ENCODE measurements at regions of chr3 and their contacts with region 1.

Region 1: GRCh38 chr3:128051837-128052594 is at the start of gene SEC61A1:
- DNase-seq: peak; percentile 95
- H3K4me3 Mint-ChIP-seq: peak within 1 kb of the TSS; percentile 99
- H3K27ac Mint-ChIP-seq: peak within 1 kb of the TSS; percentile 99
- H3K4me1 Mint-ChIP-seq: peaks cover 38% of the 10 kb centered on the region
- H3K27me3 Mint-ChIP-seq: peaks cover 11% of the 10 kb centered on the region
- total RNA-seq, gene SEC61A1: 210 and 217 TPM in 2 replicates

Region 2: DNA sequence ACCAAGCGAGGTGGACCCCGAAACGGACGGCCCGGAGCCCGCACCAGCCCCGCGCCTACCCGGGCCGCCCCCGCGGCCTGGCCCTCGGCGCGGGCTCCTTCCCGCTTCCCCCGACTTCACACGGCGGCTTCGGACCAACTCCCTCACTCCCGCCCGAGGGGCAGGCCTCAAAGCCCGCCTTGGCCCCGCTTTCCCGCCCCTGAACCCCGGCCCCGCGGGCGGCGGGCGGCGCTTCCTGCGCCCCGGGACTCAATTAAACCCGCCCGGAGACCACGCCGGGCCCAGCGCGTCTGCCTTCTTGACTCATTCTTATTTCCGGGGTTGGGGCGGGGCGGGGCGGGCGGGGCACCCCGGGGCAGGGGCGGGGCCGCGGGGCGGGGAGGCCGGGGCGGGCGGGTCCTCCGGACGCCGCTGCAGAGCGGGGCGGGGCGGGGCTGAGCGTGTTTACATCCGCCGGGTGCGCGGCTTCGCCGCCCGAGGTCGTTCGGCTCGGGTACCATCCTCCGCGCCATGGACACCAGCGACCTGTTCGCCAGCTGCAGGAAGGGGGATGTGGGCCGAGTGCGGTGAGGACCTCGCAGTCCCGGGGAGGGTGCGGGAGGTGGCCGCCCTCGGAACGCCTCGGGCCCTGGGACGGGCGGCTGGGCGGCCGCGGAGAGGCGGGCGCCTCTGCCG is 379.4 kb before region 1 on chr3 and contains the start of gene ABTB1:
- intact Hi-C with region 1: loop called (anchors 5 kb)
- DNase-seq: peak; percentile 84
- H3K4me3 Mint-ChIP-seq: peak within 1 kb of the TSS; percentile 93
- H3K27ac Mint-ChIP-seq: peak within 1 kb of the TSS; percentile 97
- H3K4me1 Mint-ChIP-seq: peaks cover 13% of the 10 kb centered on the region
- H3K27me3 Mint-ChIP-seq: no peaks in the 10 kb centered on the region
- total RNA-seq, gene ABTB1: 11.7 and 12.1 TPM in 2 replicates

Region 3: GRCh38 chr3:127835993-127836882 is 215.8 kb before region 1 on chr3:
- intact Hi-C with region 1: no loop called
- DNase-seq: no peak
- H3K4me3 Mint-ChIP-seq: no peak overlapping the region
- H3K27ac Mint-ChIP-seq: no peak overlapping the region
- H3K4me1 Mint-ChIP-seq: peaks cover 8% of the 10 kb centered on the region
- H3K27me3 Mint-ChIP-seq: peaks cover 10% of the 10 kb centered on the region

Region 4: DNA sequence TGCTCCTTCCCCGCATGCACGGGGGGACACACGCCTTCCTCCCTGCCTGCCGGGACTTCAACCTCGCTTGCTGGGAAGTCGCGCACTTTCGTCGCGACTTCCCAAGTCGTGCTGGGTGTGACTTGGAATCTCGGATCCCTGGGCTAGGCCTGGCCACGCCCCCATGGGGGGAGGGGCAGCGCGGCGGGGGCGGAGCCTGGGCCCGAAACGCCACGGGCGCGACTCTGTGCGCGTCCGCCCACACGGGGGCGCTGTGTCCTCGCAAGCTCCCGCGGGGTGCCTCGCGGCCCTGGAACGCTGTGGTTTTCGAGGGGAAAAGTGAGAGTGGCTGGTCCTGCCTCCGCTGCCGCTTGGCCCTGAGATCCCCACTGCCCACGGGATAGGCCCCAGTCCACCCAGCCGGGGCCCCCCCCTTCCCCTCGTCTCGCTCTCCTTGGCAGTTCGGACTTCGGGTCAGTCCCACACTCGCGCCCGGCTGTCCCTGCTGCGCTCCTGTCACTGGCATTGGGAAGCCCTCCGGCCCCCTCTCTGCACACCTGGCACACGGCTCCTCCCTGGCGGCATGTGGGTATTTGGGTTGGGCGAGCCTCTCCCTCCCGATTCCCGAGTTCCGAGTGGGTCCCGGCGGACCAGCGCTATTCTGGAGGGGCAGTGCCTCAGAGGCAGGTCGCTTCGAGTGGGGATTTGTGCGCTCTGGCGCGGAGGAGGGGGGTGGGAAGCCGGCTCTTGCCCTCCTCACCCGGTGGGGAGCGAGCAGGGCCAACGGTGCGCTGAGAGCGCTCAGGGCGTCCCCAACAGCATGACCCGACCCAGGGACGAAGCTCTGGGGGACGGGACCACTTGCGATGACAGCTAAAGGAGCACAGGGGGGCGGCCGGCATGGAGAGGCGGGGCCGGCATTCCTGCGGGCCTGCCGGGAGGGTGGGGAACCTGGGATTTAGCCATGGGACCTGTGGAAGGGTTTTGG is 23.8 kb after region 1 on chr3:
- intact Hi-C with region 1: loop called (anchors 2 kb)
- DNase-seq: peak; percentile 77
- H3K4me3 Mint-ChIP-seq: peak overlapping the region; percentile 30
- H3K27ac Mint-ChIP-seq: no peak overlapping the region
- H3K4me1 Mint-ChIP-seq: peaks cover 13% of the 10 kb centered on the region
- H3K27me3 Mint-ChIP-seq: no peaks in the 10 kb centered on the region